ENCODE measurements at regions of chr2 and their contacts with region 1.

Region 1: GRCh38 chr2:98771721-98772524 is 41.0 kb upstream of the MGAT4A start:
- DNase-seq: peak; percentile 75
- ATAC-seq: peak; percentile 68
- H3K4me3 Mint-ChIP-seq: peak overlapping the region; percentile 74
- H3K27ac Mint-ChIP-seq: peak overlapping the region; percentile 95
- H3K4me1 Mint-ChIP-seq: peaks cover 72% of the 10 kb centered on the region
- H3K27me3 Mint-ChIP-seq: no peaks in the 10 kb centered on the region

Region 2: DNA sequence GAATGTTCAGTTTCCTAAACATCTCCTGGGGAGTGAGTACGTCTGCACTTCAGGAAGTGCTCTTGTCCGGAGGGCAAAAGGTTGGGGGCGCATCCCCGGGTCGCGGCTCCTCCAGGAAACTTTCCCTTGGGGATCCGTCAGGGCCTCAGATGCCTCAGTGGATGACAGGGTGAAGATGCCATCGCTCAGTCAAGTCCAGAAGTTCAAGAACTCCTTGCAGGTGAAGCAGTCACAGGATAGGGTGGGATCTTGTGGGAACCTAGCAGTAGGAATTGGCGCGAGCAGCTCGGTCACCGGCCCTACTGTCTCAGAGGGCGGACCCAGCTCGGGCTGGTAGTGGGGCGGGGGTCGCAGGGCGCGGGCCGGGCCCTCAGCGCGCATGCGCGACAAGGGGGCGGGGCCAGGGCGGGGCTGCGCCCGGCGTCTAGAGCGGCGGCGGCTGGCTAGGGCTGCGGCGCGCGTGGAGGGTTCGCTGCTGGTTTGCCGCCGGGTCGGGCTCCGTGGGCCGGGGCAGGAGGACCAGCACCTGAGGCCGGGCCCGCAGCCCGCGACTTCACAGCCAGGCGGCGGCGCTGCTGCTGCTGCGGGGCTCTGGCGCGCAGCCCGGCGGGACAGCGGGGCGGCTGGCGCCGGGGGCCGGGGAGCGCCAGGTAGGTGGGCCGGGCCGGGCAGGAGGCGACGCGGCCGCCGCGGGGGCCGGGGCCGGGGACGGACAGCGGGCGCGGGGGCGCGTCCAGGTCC is 327.3 kb before region 1 on chr2 and contains the start of gene INPP4A:
- CTCF ChIA-PET with region 1: no interaction called
- POLR2A ChIA-PET with region 1: no interaction called
- intact Hi-C with region 1: loop called in 1 of 2 experiments (anchors 1 kb)
- DNase-seq: peak; percentile 87
- ATAC-seq: peak; percentile 74
- H3K4me3 Mint-ChIP-seq: peak within 1 kb of the TSS; percentile 83
- H3K27ac Mint-ChIP-seq: peak within 1 kb of the TSS; percentile 94
- H3K4me1 Mint-ChIP-seq: peaks cover 42% of the 10 kb centered on the region
- H3K27me3 Mint-ChIP-seq: no peaks in the 10 kb centered on the region
- total RNA-seq, gene INPP4A: 29.1 to 33.0 TPM

Region 3: DNA sequence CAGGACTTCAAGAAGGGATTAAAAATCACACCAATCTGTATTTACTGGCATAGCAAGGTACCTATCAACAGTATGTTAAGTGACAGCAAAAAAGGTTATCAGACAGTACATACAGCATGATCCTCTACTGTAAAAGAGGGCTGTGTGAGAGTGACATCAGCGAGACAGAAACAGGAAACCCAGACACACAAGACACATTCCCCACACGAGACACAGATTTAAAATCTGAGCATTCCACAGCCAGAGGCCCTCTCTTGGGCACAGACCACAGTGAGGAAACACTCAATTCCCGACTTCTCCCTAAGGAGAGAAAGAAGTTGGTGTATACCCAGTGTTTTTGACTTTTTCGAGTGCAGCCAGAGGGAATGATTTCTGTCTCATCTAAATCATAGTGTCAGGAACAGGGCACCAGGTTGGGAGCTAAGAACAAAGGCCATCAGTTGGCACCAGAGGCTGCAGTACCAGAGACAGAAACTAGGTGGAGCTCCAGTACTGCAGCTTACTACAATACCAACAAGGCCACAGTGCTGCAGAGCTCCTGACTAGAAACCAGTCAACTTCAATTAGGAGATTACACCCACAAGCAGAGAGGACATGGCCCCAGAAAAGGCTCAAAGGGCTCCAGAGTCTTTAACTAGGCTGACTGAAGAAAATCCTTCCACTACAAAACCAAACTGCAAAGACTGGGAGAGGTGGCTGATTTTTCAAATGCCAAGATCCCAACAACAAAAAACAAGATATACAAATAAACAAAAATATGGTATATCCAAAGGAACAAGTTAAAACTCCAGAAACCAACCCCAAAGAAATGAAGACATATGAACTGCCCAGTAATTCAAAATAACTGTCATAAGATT is 122.6 kb before region 1 on chr2:
- CTCF ChIA-PET with region 1: interaction called, 11 read pairs
- POLR2A ChIA-PET with region 1: no interaction called
- intact Hi-C with region 1: loop called in 1 of 2 experiments (anchors 2 kb)
- DNase-seq: peak; percentile 88
- ATAC-seq: peak; percentile 93
- H3K4me3 Mint-ChIP-seq: no peak overlapping the region
- H3K27ac Mint-ChIP-seq: peak overlapping the region; percentile 73
- H3K4me1 Mint-ChIP-seq: peaks cover 58% of the 10 kb centered on the region
- H3K27me3 Mint-ChIP-seq: no peaks in the 10 kb centered on the region

Region 4: GRCh38 chr2:98691303-98691702 is 80.6 kb before region 1 on chr2:
- CTCF ChIA-PET with region 1: interaction called, 4 read pairs
- POLR2A ChIA-PET with region 1: interaction called, 3 read pairs
- intact Hi-C with region 1: loop called (anchors 2 to 5 kb)
- DNase-seq: no peak
- ATAC-seq: peak; percentile 43
- H3K4me3 Mint-ChIP-seq: peak overlapping the region; percentile 20
- H3K27ac Mint-ChIP-seq: peak overlapping the region; percentile 96
- H3K4me1 Mint-ChIP-seq: peaks cover 86% of the 10 kb centered on the region
- H3K27me3 Mint-ChIP-seq: no peaks in the 10 kb centered on the region

Region 5: GRCh38 chr2:98736464-98736889 is 35.4 kb before region 1 on chr2:
- CTCF ChIA-PET with region 1: interaction called, 4 read pairs
- POLR2A ChIA-PET with region 1: interaction called, 16 read pairs
- intact Hi-C with region 1: loop called (anchors 1 kb)
- DNase-seq: peak; percentile 59
- ATAC-seq: peak; percentile 87
- H3K4me3 Mint-ChIP-seq: peak overlapping the region; percentile 34
- H3K27ac Mint-ChIP-seq: peak overlapping the region; percentile 55
- H3K4me1 Mint-ChIP-seq: peaks cover 68% of the 10 kb centered on the region
- H3K27me3 Mint-ChIP-seq: no peaks in the 10 kb centered on the region

Region 6: GRCh38 chr2:98822301-98823164 is 50.6 kb after region 1 on chr2:
- CTCF ChIA-PET with region 1: interaction called, 3 read pairs
- POLR2A ChIA-PET with region 1: no interaction called
- intact Hi-C with region 1: loop called (anchors 2 to 5 kb)
- DNase-seq: peak; percentile 82
- ATAC-seq: peak; percentile 94
- H3K4me3 Mint-ChIP-seq: peak overlapping the region; percentile 23
- H3K27ac Mint-ChIP-seq: no peak overlapping the region
- H3K4me1 Mint-ChIP-seq: peaks cover 7% of the 10 kb centered on the region
- H3K27me3 Mint-ChIP-seq: peaks cover 2% of the 10 kb centered on the region

Region 7: DNA sequence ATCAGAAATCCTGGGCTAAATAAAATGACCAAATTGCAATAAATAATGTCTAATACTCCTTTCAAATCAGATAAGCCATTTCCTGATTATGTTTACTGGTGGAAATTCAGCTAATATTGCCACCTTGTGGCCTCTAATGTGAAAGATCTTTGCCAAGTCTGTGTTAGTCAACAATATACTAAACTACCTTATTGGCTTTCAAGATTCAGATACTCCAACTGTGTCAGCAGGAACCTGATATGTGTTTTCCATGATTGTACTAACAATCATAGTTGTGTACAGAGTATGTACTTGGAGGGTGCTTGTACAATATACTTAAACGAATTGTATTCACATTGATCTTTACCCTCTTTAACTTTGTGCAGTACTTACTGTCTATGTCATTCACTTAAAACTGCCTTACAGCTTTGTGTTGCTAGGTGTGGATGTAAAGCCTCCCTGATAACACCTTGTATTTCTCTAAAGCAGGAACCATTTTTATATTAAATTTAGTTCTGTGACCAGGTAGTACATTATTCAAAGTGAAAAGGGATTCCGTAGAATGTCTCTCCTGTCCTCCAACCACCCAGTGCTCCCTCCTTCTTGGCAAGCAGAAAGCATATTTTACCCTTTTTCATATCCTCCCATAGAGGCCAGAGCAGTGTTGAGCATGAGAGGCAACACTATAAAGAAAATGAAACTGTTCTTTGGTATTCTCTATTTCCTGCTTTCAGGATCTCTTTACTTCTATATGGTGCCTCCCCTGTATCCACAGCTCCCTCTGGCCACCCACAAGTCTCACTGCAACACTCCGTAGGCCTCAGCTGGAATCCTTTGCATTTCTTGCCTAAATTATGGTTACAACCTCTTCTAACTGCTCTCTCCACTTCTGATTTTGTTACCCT is 294.4 kb after region 1 on chr2:
- CTCF ChIA-PET with region 1: no interaction called
- POLR2A ChIA-PET with region 1: no interaction called
- intact Hi-C with region 1: no loop called
- DNase-seq: peak; percentile 46
- ATAC-seq: peak; percentile 98
- H3K4me3 Mint-ChIP-seq: no peak overlapping the region
- H3K27ac Mint-ChIP-seq: no peak overlapping the region
- H3K4me1 Mint-ChIP-seq: no peaks in the 10 kb centered on the region
- H3K27me3 Mint-ChIP-seq: no peaks in the 10 kb centered on the region

Region 8: GRCh38 chr2:99180755-99181623 is 409.1 kb after region 1 on chr2 and contains the starts of genes MITD1 and MRPL30:
- CTCF ChIA-PET with region 1: no interaction called
- POLR2A ChIA-PET with region 1: no interaction called
- intact Hi-C with region 1: loop called in 1 of 2 experiments (anchors 5 kb)
- DNase-seq: peak; percentile 93
- ATAC-seq: peak; percentile 93
- H3K4me3 Mint-ChIP-seq: peak within 1 kb of the TSS; percentile 96
- H3K27ac Mint-ChIP-seq: peak within 1 kb of the TSS; percentile 99
- H3K4me1 Mint-ChIP-seq: peaks cover 57% of the 10 kb centered on the region
- H3K27me3 Mint-ChIP-seq: no peaks in the 10 kb centered on the region
- total RNA-seq, gene MITD1: 66.3 to 70.9 TPM
- total RNA-seq, gene MRPL30: 30.8 to 31.2 TPM